Activated T-helper 1 cell treated with anti-CD3 and anti-CD28 coated beads, Interleukin-12 subunit alpha, Interleukin-12 subunit beta, Interleukin-2, Interleukin-4 antibody, amounts not matched to agents 30 ng/mL and 10 ng/mL and 1 ng/mL, durations not matched to agents 14 hours and 24 hours and 36 hours (primary cell): ENCODE measurements at regions of chr11 and their contacts with region 1.

Region 1: DNA sequence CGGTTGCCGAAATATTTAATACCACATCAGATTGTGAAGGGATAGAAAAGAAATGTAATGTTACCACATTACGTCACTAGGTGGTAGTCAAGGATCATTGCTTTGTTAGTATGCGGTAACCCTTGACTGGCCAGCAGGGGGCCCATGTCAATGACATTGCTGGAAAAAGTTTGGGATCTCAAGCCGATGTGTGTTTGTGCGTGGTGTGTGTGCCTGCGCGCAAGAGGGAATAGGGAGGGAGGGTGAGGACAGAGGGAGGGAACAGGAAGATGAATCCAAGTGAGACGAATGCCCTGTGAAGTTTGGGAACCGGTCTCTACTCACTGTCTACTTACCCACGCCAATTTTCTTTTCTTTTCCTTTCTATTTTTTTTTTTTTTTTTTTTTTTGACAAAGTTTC is 10.7 kb upstream of the MRGPRX2 start:
- DNase-seq: peak; percentile 32
- H3K4me3 Mint-ChIP-seq: peak overlapping the region; percentile 48
- H3K27ac Mint-ChIP-seq: no peak overlapping the region
- H3K4me1 Mint-ChIP-seq: peaks cover 6% of the 10 kb centered on the region
- H3K27me3 Mint-ChIP-seq: peaks cover 18% of the 10 kb centered on the region

Region 2: GRCh38 chr11:19116971-19117750 is 45.9 kb after region 1 on chr11 and contains the start of gene ZDHHC13:
- intact Hi-C with region 1: loop called (anchors 2 kb)
- DNase-seq: peak; percentile 94
- H3K4me3 Mint-ChIP-seq: peak within 1 kb of the TSS; percentile 93
- H3K27ac Mint-ChIP-seq: peak within 1 kb of the TSS; percentile 84
- H3K4me1 Mint-ChIP-seq: peaks cover 54% of the 10 kb centered on the region
- H3K27me3 Mint-ChIP-seq: peaks cover 12% of the 10 kb centered on the region
- total RNA-seq, gene ZDHHC13: 25.0 and 28.9 TPM in 2 replicates

Region 3: DNA sequence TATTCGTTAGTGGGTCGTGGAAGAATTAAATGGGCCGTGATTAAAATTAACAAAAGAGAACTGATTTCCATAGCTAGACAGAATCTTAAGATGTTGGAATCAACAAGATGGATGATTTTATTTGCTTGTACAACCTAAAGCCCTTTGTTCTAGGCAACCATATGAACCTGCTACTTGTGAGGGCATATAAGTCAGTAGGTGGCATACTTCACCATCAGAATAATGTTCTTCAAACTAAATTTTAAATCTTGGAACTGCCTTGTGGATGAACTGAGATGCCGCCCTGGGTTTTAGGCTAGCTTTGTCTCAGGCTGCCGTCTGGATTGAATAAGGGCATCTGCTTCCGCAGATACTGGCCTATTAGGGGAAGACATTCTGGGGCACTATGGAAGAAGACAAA is 89.6 kb after region 1 on chr11:
- intact Hi-C with region 1: loop called (anchors 10 kb)
- DNase-seq: no peak
- H3K4me3 Mint-ChIP-seq: no peak overlapping the region
- H3K27ac Mint-ChIP-seq: no peak overlapping the region
- H3K4me1 Mint-ChIP-seq: peaks cover 15% of the 10 kb centered on the region
- H3K27me3 Mint-ChIP-seq: no peaks in the 10 kb centered on the region

Region 4: GRCh38 chr11:19311308-19312030 is 240.2 kb after region 1 on chr11:
- intact Hi-C with region 1: loop called (anchors 1 kb)
- DNase-seq: peak; percentile 16
- H3K4me3 Mint-ChIP-seq: no peak overlapping the region
- H3K27ac Mint-ChIP-seq: no peak overlapping the region
- H3K4me1 Mint-ChIP-seq: no peaks in the 10 kb centered on the region
- H3K27me3 Mint-ChIP-seq: no peaks in the 10 kb centered on the region

Region 5: GRCh38 chr11:19742588-19743292 is 671.5 kb after region 1 on chr11:
- intact Hi-C with region 1: loop called (anchors 1 kb)
- DNase-seq: peak; percentile 43
- H3K4me3 Mint-ChIP-seq: no peak overlapping the region
- H3K27ac Mint-ChIP-seq: no peak overlapping the region
- H3K4me1 Mint-ChIP-seq: no peaks in the 10 kb centered on the region
- H3K27me3 Mint-ChIP-seq: peaks cover 5% of the 10 kb centered on the region